ENCODE measurements at regions of chr14 and their contacts with region 1.

Region 1: DNA sequence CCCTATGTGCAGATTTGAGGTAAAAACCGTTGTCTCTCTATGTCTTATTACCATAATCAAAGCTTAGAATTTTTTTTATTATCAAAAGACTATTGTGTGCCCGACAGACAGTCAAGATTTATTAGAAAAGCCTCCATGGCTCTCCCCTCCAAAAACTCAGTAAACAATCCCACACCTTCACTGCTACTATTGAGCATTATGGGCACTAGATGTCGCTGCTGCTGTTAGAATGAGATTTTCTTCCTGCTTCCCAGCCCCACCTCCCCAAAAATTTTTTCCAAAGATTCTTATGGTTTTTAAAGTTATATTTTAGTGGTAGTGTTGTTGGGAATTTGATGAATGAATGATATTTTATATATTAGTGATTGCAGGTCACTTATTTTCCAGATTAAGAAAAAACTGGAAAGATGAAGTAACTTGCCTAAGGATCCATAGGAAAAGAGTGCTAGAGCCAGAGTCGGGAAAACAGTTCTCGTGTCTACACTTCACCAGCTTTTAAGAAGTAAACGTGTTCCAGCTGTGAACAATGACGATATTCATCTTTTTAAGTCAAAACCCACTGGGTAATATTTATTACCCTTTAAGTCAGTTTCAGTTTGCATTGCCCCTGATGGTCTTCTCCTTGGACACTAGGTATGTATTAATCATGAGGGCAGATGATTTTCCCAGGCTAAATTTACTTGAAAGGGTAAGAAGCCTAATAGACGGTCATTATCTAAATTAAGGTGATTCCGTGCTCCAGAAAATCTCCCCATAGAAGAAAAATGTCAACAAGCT is 12.2 kb upstream of the FOXG1 start:
- H3K4me3 ChIP-seq: no peak overlapping the region
- H3K27ac ChIP-seq: no peak overlapping the region
- H3K4me1 ChIP-seq: no peaks in the 10 kb centered on the region
- CTCF ChIP-seq: 0 out of 2 replicates have a peak, but pooled peaks have one; percentile 31

Region 2: GRCh38 chr14:28766469-28767238 is 12.3 kb after region 1 on chr14 and contains the start of gene FOXG1:
- CTCF ChIA-PET with region 1: interaction called, 18 read pairs
- POLR2A ChIA-PET with region 1: interaction called, 5 read pairs
- H3K4me3 ChIP-seq: peak within 1 kb of the TSS; percentile 88
- H3K27ac ChIP-seq: peak within 1 kb of the TSS; percentile 99
- H3K4me1 ChIP-seq: peaks cover 11% of the 10 kb centered on the region
- CTCF ChIP-seq: no peak

Region 3: DNA sequence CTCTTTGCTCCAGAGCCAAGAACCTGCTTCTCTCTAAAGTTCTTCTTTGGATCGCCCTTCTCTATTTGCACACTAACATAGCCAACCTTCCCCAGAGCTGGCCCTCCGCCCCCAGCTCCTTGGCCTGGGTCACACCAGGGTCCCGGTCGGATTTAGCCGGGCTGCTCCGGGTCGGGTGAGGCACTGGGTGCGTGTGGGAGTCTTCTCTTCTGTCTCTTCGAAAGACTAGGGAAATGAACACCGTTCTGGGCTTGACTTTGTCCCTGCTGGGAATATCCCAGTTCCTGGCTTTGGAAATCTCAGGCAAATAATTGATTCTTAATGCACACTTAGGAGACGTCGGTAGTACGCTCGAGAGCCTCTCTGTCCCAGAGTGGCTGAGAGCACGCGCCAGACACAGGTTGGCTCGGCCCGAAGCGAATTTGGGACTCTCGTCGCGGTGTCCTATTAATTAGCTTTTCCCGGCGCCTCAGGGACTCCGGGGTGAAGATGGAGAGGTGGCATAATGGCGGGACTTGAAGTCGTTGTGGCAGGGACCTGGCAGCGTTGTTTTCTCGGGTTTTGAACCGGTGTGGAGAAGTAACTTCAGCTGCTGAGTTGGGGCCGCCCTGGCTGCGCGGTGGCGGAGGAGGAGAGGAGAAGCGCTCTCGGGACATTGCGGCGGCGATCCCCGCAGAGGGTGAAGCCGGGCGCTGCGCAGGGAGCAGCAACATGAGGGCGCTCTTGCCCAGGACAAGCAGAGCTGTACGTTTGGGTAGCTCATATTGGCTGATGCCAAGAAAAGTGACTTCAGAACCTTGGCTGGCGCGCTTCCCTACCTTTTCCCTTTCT is 19.7 kb after region 1 on chr14:
- CTCF ChIA-PET with region 1: interaction called, 20 read pairs
- POLR2A ChIA-PET with region 1: no interaction called
- H3K4me3 ChIP-seq: peak overlapping the region; percentile 36
- H3K27ac ChIP-seq: no peak overlapping the region
- H3K4me1 ChIP-seq: peaks cover 16% of the 10 kb centered on the region
- CTCF ChIP-seq: peak; percentile 77

Measured in HEK293 (cell line).